ENCODE measurements at regions of chr1 and their contacts with region 1.

Region 1: DNA sequence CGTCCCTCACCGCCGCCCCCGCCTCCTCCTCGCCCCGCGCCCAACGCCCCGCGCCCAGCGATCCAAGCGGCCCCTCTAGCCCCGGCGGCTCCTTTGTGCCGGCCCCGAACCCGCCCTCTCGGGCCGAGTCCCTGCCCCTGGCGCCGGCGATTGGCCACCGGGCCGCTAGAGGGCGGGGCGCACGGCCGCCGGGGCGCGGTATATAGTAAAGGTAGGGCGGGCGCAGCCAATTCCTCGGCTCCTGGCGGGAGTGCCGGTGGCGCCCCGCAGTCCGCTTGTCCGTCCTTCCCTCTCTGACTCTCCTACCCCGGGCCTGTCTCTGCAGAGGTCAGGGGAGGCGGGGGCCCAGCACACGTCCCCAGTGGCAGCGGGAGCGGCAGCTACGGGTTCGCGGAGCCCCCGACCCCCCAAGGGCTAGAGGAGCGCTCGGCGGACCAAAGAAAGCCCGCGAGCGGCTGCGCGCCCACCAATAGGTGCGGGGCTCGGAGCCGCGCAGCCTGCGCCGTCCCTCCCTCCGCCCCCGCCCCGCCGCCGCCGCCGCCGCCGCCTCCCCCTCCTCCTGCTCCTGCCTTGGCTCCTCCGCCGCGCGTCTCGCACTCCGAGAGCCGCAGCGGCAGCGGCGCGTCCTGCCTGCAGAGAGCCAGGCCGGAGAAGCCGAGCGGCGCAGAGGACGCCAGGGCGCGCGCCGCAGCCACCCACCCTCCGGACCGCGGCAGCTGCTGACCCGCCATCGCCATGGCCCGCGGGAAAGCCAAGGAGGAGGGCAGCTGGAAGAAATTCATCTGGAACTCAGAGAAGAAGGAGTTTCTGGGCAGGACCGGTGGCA is at the start of gene ATP1B1:
- DNase-seq: peak; percentile 79 to 95 (median 90)
- H3K4me3 ChIP-seq: peak within 1 kb of the TSS; percentile 71 to 99 (median 91)
- H3K27ac ChIP-seq: peak within 1 kb of the TSS; percentile 84 to 99 (median 97)
- H3K27me3 ChIP-seq: no peaks in the 10 kb centered on the region
- CTCF ChIP-seq: peak in 55 of 56 donors; percentile 26 to 89 (median 67)
- total RNA-seq, gene ATP1B1: 155 to 1,070 (median 769) TPM

Region 2: GRCh38 chr1:168623003-168623828 is 483.1 kb before region 1 on chr1:
- intact Hi-C with region 1: loop called in 1 of 2 experiments (anchors 5 kb)
- DNase-seq: no peak
- H3K4me3 ChIP-seq: no peak overlapping the region
- H3K27ac ChIP-seq: peak overlapping the region in 1 of 59 donors; percentile 10
- H3K27me3 ChIP-seq: no peaks in the 10 kb centered on the region
- CTCF ChIP-seq: no peak

Region 3: DNA sequence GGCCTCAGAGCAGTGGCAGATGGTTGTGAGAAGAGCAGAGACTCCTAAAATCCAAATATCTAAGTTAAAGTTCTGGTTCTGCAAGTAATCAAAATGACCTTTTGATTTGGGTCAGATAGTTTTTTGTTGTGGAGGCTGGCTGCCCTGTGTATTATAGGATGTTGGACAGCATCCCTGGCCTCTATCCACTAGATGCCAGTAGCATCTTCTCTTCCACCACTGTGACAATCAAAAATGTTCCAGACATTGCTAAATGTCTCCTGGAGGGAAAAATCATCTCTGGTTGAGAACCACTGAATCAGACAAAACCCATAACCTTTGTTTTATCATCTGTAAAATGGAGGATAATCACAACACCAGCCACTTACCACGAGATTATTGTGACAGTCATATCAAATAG is 371.4 kb before region 1 on chr1:
- intact Hi-C with region 1: loop called (anchors 5 to 10 kb)
- DNase-seq: no peak
- H3K4me3 ChIP-seq: no peak overlapping the region
- H3K27ac ChIP-seq: peak overlapping the region in 6 of 59 donors; percentile 1 to 38 (median 16)
- H3K27me3 ChIP-seq: no peaks in the 10 kb centered on the region
- CTCF ChIP-seq: peak in 50 of 56 donors; percentile 14 to 66 (median 40)

Region 4: GRCh38 chr1:168960595-168960994 is 145.7 kb before region 1 on chr1:
- intact Hi-C with region 1: loop called (anchors 5 kb)
- DNase-seq: peak in 7 of 10 donors; percentile 38 to 74 (median 53)
- H3K4me3 ChIP-seq: peak overlapping the region in 12 of 59 donors; percentile 6 to 35 (median 15)
- H3K27ac ChIP-seq: peak overlapping the region in 51 of 59 donors; percentile 12 to 88 (median 62)
- H3K27me3 ChIP-seq: no peaks in the 10 kb centered on the region
- CTCF ChIP-seq: peak in 6 of 56 donors; percentile 11 to 28 (median 16)

Region 5: GRCh38 chr1:169133801-169134502 is 27.6 kb after region 1 on chr1:
- intact Hi-C with region 1: loop called in 1 of 2 experiments (anchors 2 kb)
- DNase-seq: no peak
- H3K4me3 ChIP-seq: no peak overlapping the region
- H3K27ac ChIP-seq: peak overlapping the region in 49 of 59 donors; percentile 1 to 84 (median 60)
- H3K27me3 ChIP-seq: no peaks in the 10 kb centered on the region
- CTCF ChIP-seq: peak in 55 of 56 donors; percentile 15 to 81 (median 57)

Measured in dorsolateral prefrontal cortex (tissue), 120 donors.